Prostate gland (tissue), 2 donors: ENCODE measurements at regions of chr2 and their contacts with region 1.

Region 1: GRCh38 chr2:83951378-83951947 is 507.6 kb downstream of the SUCLG1 start:
- DNase-seq: no peak
- H3K4me3 ChIP-seq: no peak overlapping the region
- H3K27ac ChIP-seq: no peak overlapping the region
- H3K4me1 ChIP-seq: no peaks in the 10 kb centered on the region
- H3K27me3 ChIP-seq: no peaks in the 10 kb centered on the region
- CTCF ChIP-seq: no peak
- POLR2A ChIP-seq: no peak

Region 2: DNA sequence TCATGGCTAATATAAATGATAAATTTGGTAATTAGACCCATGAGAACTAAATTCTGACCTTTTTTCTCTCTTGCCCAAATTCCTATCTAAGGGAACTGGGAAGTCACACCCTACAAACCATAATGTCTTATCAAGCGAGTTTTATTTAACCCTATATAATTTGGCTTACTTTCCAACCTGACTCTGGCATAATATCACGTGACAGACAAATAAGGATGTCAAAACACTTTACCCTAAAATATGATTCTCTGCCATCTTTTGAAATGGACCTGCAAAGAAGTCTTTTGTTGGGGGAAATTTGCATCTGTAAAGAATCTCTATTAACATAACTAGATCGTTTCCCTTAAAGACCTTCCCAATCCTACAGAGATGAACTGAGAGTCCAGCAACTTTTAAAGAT is 1823.4 kb before region 1 on chr2:
- intact Hi-C with region 1: no loop called
- DNase-seq: no peak
- H3K4me3 ChIP-seq: no peak overlapping the region
- H3K27ac ChIP-seq: no peak overlapping the region
- H3K4me1 ChIP-seq: no peaks in the 10 kb centered on the region
- H3K27me3 ChIP-seq: no peaks in the 10 kb centered on the region
- CTCF ChIP-seq: no peak
- POLR2A ChIP-seq: no peak

Region 3: GRCh38 chr2:83900862-83901261 is 50.6 kb before region 1 on chr2:
- intact Hi-C with region 1: loop called (anchors 2 kb)
- DNase-seq: no peak
- H3K4me3 ChIP-seq: no peak overlapping the region
- H3K27ac ChIP-seq: no peak overlapping the region
- H3K4me1 ChIP-seq: no peaks in the 10 kb centered on the region
- H3K27me3 ChIP-seq: no peaks in the 10 kb centered on the region
- CTCF ChIP-seq: no peak
- POLR2A ChIP-seq: no peak

Region 4: GRCh38 chr2:83923531-83923930 is 27.9 kb before region 1 on chr2:
- intact Hi-C with region 1: no loop called
- DNase-seq: no peak
- H3K4me3 ChIP-seq: no peak overlapping the region
- H3K27ac ChIP-seq: no peak overlapping the region
- H3K4me1 ChIP-seq: no peaks in the 10 kb centered on the region
- H3K27me3 ChIP-seq: no peaks in the 10 kb centered on the region
- CTCF ChIP-seq: no peak
- POLR2A ChIP-seq: no peak